K562 (cell line): ENCODE measurements at regions of chr3 and their contacts with region 1.

Region 1: GRCh38 chr3:160577556-160578195 is 12.3 kb upstream of the KPNA4 start:
- DNase-seq: no peak
- ATAC-seq: peak; percentile 63
- H3K4me3 ChIP-seq: no peak overlapping the region
- H3K27ac ChIP-seq: no peak overlapping the region
- H3K4me1 ChIP-seq: no peaks in the 10 kb centered on the region
- H3K27me3 ChIP-seq: no peaks in the 10 kb centered on the region; a peak in 1 of 5 replicates
- CTCF ChIP-seq: peak in 1 of 3 experiments; percentile 20; a peak in 1 of 6 replicates
- EP300 ChIP-seq: no peak
- POLR2A ChIP-seq: no peak
- RAD21 ChIP-seq: no peak; a peak in 1 of 4 replicates

Region 2: DNA sequence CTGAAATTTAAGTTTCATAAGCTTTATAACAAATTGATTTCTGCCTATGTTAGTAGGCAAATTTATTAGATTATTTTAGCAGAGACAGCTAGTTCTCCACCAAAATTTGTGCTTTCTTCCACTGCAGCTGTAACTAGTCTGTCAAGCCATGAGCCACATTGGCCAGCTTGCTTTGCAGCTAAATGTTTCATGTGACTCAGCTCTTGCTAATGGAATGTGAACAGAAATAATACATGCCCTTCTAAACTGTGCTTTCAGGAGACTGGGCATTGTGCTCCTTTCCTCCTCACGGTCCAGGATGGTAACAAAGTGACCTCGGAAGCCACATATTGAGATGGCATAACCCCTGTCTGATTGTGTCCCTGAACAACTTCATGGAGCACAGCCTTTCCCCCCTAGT is 39.0 kb after region 1 on chr3:
- CTCF ChIA-PET with region 1: no interaction called
- POLR2A ChIA-PET with region 1: no interaction called
- in situ Hi-C with region 1: no loop called
- intact Hi-C with region 1: no loop called
- DNase-seq: no peak
- ATAC-seq: no peak
- H3K4me3 ChIP-seq: no peak overlapping the region
- H3K27ac ChIP-seq: no peak overlapping the region
- H3K4me1 ChIP-seq: no peaks in the 10 kb centered on the region
- H3K27me3 ChIP-seq: no peaks in the 10 kb centered on the region
- CTCF ChIP-seq: no peak
- EP300 ChIP-seq: no peak
- POLR2A ChIP-seq: no peak
- RAD21 ChIP-seq: no peak

Region 3: DNA sequence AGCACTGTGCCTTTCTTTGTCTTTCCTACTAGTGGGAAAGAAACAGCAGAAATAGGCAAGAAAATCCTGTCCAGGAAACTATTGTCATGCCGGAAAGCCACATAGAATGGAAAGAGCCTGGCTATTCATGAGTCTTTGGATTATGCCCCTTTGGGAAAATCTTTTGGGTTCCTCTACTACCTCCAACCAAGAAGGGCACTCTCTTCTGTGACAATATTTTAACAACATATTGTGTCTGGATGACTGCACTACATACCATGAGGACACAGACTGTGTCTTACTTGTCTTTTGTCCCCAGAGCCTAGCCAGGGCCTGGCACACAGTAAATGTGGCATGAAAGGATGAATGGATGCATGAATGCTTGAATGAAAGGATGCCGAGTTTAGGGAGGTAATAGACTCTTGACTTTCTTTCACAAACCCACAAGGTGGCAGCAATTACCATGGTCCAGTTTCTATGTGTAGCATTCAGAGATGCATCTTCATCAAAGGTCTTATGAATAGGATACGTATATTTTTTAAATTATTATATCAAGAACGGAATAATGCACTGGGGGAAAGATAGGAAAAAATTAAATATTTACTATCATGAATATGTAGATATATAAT is 129.6 kb after region 1 on chr3:
- CTCF ChIA-PET with region 1: no interaction called
- POLR2A ChIA-PET with region 1: no interaction called
- in situ Hi-C with region 1: no loop called
- intact Hi-C with region 1: loop called (anchors 5 kb)
- DNase-seq: peak in 2 of 4 experiments; percentile 27 to 47
- ATAC-seq: peak; percentile 73
- H3K4me3 ChIP-seq: no peak overlapping the region
- H3K27ac ChIP-seq: no peak overlapping the region
- H3K4me1 ChIP-seq: no peaks in the 10 kb centered on the region
- H3K27me3 ChIP-seq: no peaks in the 10 kb centered on the region
- CTCF ChIP-seq: peak; percentile 19 to 67 (median 44); a peak in 4 of 6 replicates
- EP300 ChIP-seq: no peak
- POLR2A ChIP-seq: no peak
- RAD21 ChIP-seq: peak; percentile 71 to 73